Activated CD4-positive, alpha-beta T cell treated with anti-CD3 and anti-CD28 coated beads, Interleukin-2, amount 10 ng/mL, durations not matched to agents 24 days and 14 days (primary cell): ENCODE measurements at regions of chr4 and their contacts with region 1.

Region 1: DNA sequence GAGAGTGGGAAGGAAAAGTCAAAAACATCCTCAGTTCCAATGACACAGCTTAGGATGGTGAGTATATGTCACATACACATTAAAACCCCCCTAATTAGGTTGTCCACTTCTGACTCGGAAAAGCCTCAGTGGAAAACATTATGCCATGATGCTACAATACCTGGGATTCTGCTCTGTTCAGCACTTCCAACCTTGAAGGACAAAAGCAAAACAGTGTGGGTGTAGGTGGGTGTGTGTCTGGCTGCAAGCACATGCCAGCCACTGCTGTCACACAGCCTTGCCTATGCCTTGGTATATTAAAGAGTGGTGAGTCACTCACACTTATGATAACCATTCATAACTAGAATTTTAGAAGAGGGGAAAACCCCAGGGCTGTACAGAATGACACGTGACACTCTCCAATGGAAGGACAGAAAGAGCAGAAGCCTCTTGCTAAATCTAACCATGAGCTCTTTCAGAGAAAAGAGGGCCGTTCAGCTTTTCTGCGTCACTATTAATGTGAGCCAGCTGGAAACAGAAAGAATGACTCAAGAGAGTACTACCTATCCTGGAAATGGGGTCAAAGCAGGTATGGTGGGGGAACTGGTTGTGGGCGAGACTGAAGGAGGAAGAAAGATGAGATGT is 159.6 kb downstream of the TET2 start:
- DNase-seq: peak; percentile 83
- H3K4me3 Mint-ChIP-seq: peak overlapping the region; percentile 61
- H3K27ac Mint-ChIP-seq: peak overlapping the region; percentile 94
- H3K4me1 Mint-ChIP-seq: peaks cover 22% of the 10 kb centered on the region
- H3K27me3 Mint-ChIP-seq: no peaks in the 10 kb centered on the region

Region 2: GRCh38 chr4:104829761-104830160 is 476.5 kb before region 1 on chr4:
- intact Hi-C with region 1: no loop called
- DNase-seq: no peak
- H3K4me3 Mint-ChIP-seq: no peak overlapping the region
- H3K27ac Mint-ChIP-seq: no peak overlapping the region
- H3K4me1 Mint-ChIP-seq: no peaks in the 10 kb centered on the region
- H3K27me3 Mint-ChIP-seq: no peaks in the 10 kb centered on the region

Region 3: GRCh38 chr4:104966349-104967033 is 339.8 kb before region 1 on chr4:
- intact Hi-C with region 1: loop called (anchors 1 kb)
- DNase-seq: peak; percentile 82
- H3K4me3 Mint-ChIP-seq: peak overlapping the region; percentile 71
- H3K27ac Mint-ChIP-seq: peak overlapping the region; percentile 87
- H3K4me1 Mint-ChIP-seq: peaks cover 10% of the 10 kb centered on the region
- H3K27me3 Mint-ChIP-seq: peaks cover 3% of the 10 kb centered on the region

Region 4: DNA sequence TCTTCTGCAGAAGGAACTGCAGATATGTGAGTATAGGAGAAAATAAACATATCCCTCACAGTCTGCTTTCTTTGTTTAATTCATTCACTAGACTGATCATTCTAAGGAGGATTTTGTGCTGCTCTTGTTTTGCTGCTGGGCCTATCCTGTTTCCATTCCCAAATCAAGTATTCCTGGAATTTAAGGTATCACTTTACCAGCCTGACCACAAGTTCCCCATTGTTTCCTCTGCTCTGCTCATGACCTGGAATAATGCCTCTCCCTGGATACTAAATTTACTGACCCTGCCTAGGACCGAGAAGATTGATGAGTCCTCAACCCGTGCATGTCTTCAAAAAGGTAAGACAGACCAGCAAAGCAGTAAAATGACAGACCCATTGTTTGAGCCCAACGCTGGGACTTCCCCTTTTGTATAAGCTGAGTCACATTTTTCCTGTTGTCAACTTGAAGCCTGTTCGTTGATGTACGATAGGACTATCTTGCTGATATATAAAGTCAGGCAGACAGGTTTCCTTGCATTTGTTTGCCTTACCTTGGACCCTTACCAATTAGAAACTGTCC is 245.1 kb before region 1 on chr4:
- intact Hi-C with region 1: loop called (anchors 1 kb)
- DNase-seq: peak; percentile 81
- H3K4me3 Mint-ChIP-seq: peak overlapping the region; percentile 70
- H3K27ac Mint-ChIP-seq: peak overlapping the region; percentile 94
- H3K4me1 Mint-ChIP-seq: peaks cover 35% of the 10 kb centered on the region
- H3K27me3 Mint-ChIP-seq: peaks cover 1% of the 10 kb centered on the region

Region 5: GRCh38 chr4:105191621-105192210 is 114.6 kb before region 1 on chr4:
- intact Hi-C with region 1: loop called (anchors 1 kb)
- DNase-seq: no peak
- H3K4me3 Mint-ChIP-seq: peak overlapping the region; percentile 8
- H3K27ac Mint-ChIP-seq: peak overlapping the region; percentile 79
- H3K4me1 Mint-ChIP-seq: peaks cover 45% of the 10 kb centered on the region
- H3K27me3 Mint-ChIP-seq: no peaks in the 10 kb centered on the region

Region 6: GRCh38 chr4:105215609-105216313 is 90.5 kb before region 1 on chr4:
- intact Hi-C with region 1: loop called (anchors 1 kb)
- DNase-seq: no peak
- H3K4me3 Mint-ChIP-seq: peak overlapping the region; percentile 42
- H3K27ac Mint-ChIP-seq: peak overlapping the region; percentile 63
- H3K4me1 Mint-ChIP-seq: peaks cover 12% of the 10 kb centered on the region
- H3K27me3 Mint-ChIP-seq: no peaks in the 10 kb centered on the region

Region 7: GRCh38 chr4:105343146-105343931 is 37.1 kb after region 1 on chr4:
- intact Hi-C with region 1: no loop called
- DNase-seq: no peak
- H3K4me3 Mint-ChIP-seq: no peak overlapping the region
- H3K27ac Mint-ChIP-seq: no peak overlapping the region
- H3K4me1 Mint-ChIP-seq: no peaks in the 10 kb centered on the region
- H3K27me3 Mint-ChIP-seq: no peaks in the 10 kb centered on the region

Region 8: DNA sequence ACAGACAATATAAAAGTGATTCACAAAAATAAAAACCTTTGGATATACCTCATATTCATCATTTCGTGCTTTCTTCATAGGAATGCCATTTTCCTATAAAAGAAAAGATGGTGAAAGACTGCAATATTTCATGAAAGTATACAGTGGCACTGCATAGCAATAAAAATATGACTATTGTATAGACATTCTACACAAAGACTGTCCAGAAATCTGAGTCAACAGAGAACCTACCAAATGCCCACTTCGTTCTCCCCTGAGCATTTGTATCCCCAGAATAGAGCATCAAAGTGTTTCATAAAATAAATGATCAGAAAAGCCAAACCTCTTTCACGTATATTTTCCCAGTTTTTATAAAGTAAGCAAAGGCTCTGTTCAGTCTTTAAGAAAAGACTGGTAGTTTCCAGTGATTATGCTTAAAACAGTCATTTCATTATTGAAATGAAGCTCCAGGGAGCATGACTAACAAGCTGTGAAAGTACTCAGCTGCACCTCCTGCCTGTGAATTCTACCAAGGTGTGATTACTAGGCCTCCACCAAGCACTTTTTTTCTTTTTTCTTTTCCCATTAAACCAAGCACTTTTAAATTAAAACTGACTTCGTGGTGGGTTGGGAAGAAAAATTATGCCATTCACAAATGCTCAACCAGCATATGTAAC is 147.4 kb after region 1 on chr4:
- intact Hi-C with region 1: loop called (anchors 1 kb)
- DNase-seq: no peak
- H3K4me3 Mint-ChIP-seq: no peak overlapping the region
- H3K27ac Mint-ChIP-seq: peak overlapping the region; percentile 79
- H3K4me1 Mint-ChIP-seq: peaks cover 9% of the 10 kb centered on the region
- H3K27me3 Mint-ChIP-seq: no peaks in the 10 kb centered on the region

Region 9: GRCh38 chr4:105715692-105716278 is 409.5 kb after region 1 on chr4:
- intact Hi-C with region 1: loop called (anchors 10 kb)
- DNase-seq: no peak
- H3K4me3 Mint-ChIP-seq: no peak overlapping the region
- H3K27ac Mint-ChIP-seq: no peak overlapping the region
- H3K4me1 Mint-ChIP-seq: peaks cover 4% of the 10 kb centered on the region
- H3K27me3 Mint-ChIP-seq: peaks cover 1% of the 10 kb centered on the region